Spleen (tissue), 13 donors: ENCODE measurements at regions of chr19 and their contacts with region 1.

Region 1: DNA sequence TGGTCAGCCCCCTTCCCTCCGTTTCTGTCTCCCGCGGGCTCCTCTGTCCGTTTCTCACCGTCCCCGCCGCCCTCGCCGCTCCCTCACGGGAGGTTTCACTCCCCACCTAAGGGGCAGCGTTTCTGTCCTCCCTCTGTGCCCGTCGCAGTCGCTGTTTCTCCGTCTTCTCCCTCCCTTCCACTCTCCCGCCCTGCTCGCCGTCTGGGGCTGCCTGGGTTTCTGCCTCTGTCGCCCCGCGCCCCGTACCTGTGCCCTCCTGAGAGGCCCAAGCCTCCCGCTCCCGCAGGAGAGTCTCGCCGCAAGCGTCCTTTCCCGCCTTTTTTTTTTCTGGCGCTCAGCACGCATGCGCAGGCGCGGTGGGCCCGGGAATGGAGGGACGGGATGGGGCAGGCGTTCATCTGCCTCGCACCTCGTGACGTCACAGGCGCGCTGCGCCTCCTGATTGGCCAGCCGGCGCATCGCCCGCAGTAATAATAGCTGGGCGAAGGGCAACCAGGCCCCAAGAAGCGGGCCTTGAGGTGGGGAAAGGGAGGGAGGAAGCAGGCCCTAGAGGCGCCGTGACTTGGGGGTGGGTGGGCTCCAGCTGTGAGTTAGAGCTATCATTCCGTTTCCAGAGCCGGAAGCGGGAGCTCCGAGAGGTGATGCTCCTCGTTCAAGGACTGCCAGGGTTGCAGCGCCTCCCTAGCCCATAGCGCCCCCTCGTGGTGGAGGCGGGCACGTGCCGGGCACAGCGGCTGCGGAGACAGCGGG is 15.4 kb downstream of the SSC5D start:
- DNase-seq: peak; percentile 97
- H3K4me3 ChIP-seq: peak overlapping the region; percentile 17 to 72 (median 46)
- H3K27ac ChIP-seq: peak overlapping the region; percentile 66 to 93 (median 86)
- H3K4me1 ChIP-seq: peaks cover 4 to 17% (median 15%) of the 10 kb centered on the region in 6 donors
- H3K27me3 ChIP-seq: no peaks in the 10 kb centered on the region
- CTCF ChIP-seq: peak; percentile 95 to 100 (median 98)
- POLR2A ChIP-seq: no peak

Region 2: DNA sequence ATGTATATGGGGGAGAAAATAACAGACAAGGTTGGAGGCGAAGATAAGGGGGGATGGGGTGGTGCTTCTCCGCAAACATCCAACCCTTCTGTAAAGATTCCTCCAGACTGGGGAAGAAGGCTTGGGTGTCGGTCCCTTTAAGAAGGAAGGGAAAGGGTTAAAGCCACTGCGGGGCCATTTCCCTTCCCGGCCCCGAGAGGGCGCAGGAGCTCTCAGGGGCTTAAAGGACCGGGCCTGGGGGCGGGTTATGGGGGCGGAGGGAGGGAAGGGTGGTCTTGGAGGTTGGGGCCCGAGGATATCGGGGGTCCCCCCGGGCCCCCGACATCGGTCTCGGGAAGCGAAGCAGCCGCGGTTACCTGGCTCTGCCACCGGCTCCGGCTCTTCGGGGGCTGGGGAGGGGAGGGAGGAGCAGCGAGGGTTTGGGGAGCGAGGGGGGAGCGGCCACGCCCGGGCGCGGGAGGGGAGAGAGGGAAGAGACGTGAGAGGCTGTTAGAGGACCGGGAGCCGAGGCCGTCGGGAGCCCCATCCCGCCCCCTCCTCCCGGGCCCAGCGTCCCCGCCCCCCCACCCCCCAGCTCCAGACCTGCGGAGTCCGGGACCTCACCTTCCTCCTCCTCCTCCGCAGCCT is 357.5 kb before region 1 on chr19:
- intact Hi-C with region 1: loop called (anchors 10 kb)
- DNase-seq: no peak
- H3K4me3 ChIP-seq: peak overlapping the region in 1 of 8 donors; percentile 56
- H3K27ac ChIP-seq: no peak overlapping the region
- H3K4me1 ChIP-seq: peaks cover 0 to 31% (median 16%) of the 10 kb centered on the region in 6 donors
- H3K27me3 ChIP-seq: peaks cover 4 to 87% (median 70%) of the 10 kb centered on the region in 7 donors
- CTCF ChIP-seq: peak in 2 of 11 experiments; percentile 42
- POLR2A ChIP-seq: no peak

Region 3: DNA sequence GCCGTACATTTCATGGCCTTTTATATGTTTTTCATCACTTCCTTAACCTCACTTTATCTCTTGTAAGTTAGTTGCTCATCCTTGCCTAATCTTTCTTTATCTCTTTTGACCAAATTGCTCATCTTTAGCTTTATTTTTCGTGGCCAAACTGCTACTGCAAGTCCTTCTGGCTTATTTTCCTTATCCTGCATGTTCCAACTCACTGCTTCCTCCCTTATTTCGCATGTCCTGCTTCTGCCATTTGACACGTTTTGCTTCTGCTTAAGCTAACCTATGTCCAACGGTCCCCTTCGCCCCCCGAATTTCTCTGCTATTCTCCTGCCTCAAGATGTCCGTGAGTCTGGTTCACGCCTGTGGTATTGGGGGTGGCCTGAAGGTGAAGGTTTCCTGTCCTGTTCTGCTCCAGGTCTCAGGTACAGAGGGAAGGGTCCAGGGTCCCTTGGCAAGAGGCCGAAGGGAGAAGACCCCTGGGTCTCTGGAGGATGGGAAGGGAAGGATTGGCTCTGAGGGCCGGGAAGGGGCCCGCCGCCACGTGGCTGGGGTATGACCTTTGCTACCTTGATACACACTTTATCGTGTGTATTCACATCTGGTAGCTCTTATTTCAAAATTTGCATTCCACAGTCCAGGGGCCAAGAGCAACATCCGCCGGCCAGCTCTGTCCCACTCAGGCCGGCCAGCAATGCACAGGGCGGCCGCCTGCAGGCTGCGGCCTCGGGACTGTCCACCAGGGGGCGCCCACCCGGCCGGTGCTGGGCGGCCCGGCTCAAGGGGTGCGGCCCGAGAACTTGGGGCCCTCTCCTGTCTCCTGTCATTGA is 36.2 kb before region 1 on chr19:
- intact Hi-C with region 1: loop called (anchors 2 kb)
- DNase-seq: peak; percentile 93
- H3K4me3 ChIP-seq: no peak overlapping the region
- H3K27ac ChIP-seq: peak overlapping the region in 1 of 8 donors; percentile 0
- H3K4me1 ChIP-seq: peaks cover 0 to 17% (median 13%) of the 10 kb centered on the region in 6 donors
- H3K27me3 ChIP-seq: no peaks in the 10 kb centered on the region
- CTCF ChIP-seq: peak; percentile 87 to 100 (median 99)
- POLR2A ChIP-seq: no peak

Region 4: GRCh38 chr19:55720214-55720746 is 216.6 kb after region 1 on chr19:
- intact Hi-C with region 1: no loop called
- DNase-seq: no peak
- H3K4me3 ChIP-seq: no peak overlapping the region
- H3K27ac ChIP-seq: no peak overlapping the region
- H3K4me1 ChIP-seq: no peaks in the 10 kb centered on the region
- H3K27me3 ChIP-seq: peaks cover 0 to 53% (median 26%) of the 10 kb centered on the region in 7 donors
- CTCF ChIP-seq: no peak
- POLR2A ChIP-seq: no peak